ENCODE measurements at regions of chr3 and their contacts with region 1.

Region 1: DNA sequence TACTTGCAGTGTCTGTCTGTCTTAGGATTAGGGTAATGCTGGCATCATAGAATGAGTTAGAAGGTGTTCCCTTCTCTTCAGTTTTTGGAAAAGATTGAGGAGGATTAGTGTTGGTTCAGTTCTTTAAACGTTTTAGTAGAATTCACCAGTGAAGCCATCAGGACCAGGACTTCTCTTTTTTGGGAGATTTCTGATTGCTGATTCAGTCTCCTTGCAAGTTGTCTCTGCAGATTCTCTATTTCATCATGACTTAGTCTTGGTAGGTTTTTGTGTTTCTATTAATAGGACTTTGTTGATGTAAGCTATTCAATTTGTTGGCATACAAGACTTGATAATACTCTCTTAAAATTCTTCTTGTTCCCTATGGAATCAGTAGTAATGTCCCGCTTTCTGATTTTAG is 48.9 kb downstream of the STT3B start:
- DNase-seq: no peak
- ATAC-seq: no peak
- H3K4me3 ChIP-seq: no peak overlapping the region
- H3K4me3 Mint-ChIP-seq: no peak overlapping the region
- H3K27ac ChIP-seq: no peak overlapping the region
- H3K27ac Mint-ChIP-seq: no peak overlapping the region
- H3K4me1 ChIP-seq: peaks cover 0 to 6% of the 10 kb centered on the region in 2 donors
- H3K4me1 Mint-ChIP-seq: peaks cover 30% of the 10 kb centered on the region
- H3K27me3 ChIP-seq: no peaks in the 10 kb centered on the region
- H3K27me3 Mint-ChIP-seq: no peaks in the 10 kb centered on the region
- CTCF ChIP-seq: no peak

Region 2: GRCh38 chr3:31439890-31440750 is 141.5 kb before region 1 on chr3:
- CTCF ChIA-PET with region 1: no interaction called
- POLR2A ChIA-PET with region 1: no interaction called
- intact Hi-C with region 1: no loop called
- DNase-seq: no peak
- ATAC-seq: no peak
- H3K4me3 ChIP-seq: no peak overlapping the region
- H3K4me3 Mint-ChIP-seq: no peak overlapping the region
- H3K27ac ChIP-seq: no peak overlapping the region
- H3K27ac Mint-ChIP-seq: no peak overlapping the region
- H3K4me1 ChIP-seq: no peaks in the 10 kb centered on the region
- H3K4me1 Mint-ChIP-seq: peaks cover 3% of the 10 kb centered on the region
- H3K27me3 ChIP-seq: no peaks in the 10 kb centered on the region
- H3K27me3 Mint-ChIP-seq: peaks cover 5% of the 10 kb centered on the region
- CTCF ChIP-seq: no peak

Region 3: DNA sequence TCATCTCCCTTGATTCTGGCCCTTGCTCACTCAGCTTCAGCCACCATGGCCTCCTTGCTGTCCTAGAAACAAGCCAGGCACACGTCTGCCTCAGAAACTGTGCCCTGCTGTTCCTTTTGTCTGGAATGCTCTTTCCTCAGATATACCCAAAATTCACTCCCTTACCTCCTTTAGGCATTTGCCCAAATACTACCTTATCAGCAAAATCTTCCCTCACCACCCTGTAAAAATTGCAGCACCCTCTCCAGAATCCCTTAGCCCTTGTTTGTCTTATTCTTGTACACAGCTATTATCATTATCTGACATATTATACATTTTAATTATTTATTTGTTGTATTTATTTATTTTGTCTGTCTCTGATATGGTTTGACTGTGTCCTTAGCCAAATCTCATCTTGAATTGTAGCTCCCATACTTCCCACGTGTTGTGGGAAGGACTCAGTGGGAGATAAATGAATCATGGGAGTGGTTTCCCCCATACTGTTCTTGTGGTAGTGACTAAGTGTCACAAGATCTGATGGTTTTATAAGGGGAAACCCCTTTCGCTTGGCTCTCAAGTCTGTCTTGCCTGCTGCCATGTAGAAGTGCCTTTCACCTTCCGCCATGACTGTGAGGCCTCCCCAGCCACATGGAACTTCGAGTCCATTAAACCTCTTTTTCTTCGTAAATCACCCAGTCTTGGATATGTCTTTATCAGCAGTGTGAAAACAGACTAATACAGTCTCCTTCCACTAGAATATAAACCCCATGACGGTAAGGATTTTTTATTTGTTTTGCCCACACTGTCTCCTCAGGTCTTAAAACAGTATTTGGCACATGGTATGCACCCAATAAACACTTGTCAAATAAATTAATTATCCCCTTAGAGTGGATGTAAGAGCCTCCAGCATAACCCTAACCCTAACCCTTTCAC is 108.9 kb before region 1 on chr3:
- CTCF ChIA-PET with region 1: no interaction called
- POLR2A ChIA-PET with region 1: no interaction called
- intact Hi-C with region 1: no loop called
- DNase-seq: no peak
- ATAC-seq: no peak
- H3K4me3 ChIP-seq: no peak overlapping the region
- H3K4me3 Mint-ChIP-seq: no peak overlapping the region
- H3K27ac ChIP-seq: no peak overlapping the region
- H3K27ac Mint-ChIP-seq: no peak overlapping the region
- H3K4me1 ChIP-seq: no peaks in the 10 kb centered on the region
- H3K4me1 Mint-ChIP-seq: peaks cover 3% of the 10 kb centered on the region
- H3K27me3 ChIP-seq: no peaks in the 10 kb centered on the region
- H3K27me3 Mint-ChIP-seq: no peaks in the 10 kb centered on the region
- CTCF ChIP-seq: no peak

Region 4: GRCh38 chr3:31567036-31567435 is 14.6 kb before region 1 on chr3:
- CTCF ChIA-PET with region 1: interaction called, 3 read pairs
- POLR2A ChIA-PET with region 1: no interaction called
- intact Hi-C with region 1: loop called (anchors 2 kb)
- DNase-seq: peak; percentile 33
- ATAC-seq: peak; percentile 49
- H3K4me3 ChIP-seq: no peak overlapping the region
- H3K4me3 Mint-ChIP-seq: no peak overlapping the region
- H3K27ac ChIP-seq: no peak overlapping the region
- H3K27ac Mint-ChIP-seq: no peak overlapping the region
- H3K4me1 ChIP-seq: peaks cover 19 to 51% of the 10 kb centered on the region in 2 donors
- H3K4me1 Mint-ChIP-seq: peaks cover 77% of the 10 kb centered on the region
- H3K27me3 ChIP-seq: no peaks in the 10 kb centered on the region
- H3K27me3 Mint-ChIP-seq: no peaks in the 10 kb centered on the region
- CTCF ChIP-seq: peak; percentile 68

Region 5: DNA sequence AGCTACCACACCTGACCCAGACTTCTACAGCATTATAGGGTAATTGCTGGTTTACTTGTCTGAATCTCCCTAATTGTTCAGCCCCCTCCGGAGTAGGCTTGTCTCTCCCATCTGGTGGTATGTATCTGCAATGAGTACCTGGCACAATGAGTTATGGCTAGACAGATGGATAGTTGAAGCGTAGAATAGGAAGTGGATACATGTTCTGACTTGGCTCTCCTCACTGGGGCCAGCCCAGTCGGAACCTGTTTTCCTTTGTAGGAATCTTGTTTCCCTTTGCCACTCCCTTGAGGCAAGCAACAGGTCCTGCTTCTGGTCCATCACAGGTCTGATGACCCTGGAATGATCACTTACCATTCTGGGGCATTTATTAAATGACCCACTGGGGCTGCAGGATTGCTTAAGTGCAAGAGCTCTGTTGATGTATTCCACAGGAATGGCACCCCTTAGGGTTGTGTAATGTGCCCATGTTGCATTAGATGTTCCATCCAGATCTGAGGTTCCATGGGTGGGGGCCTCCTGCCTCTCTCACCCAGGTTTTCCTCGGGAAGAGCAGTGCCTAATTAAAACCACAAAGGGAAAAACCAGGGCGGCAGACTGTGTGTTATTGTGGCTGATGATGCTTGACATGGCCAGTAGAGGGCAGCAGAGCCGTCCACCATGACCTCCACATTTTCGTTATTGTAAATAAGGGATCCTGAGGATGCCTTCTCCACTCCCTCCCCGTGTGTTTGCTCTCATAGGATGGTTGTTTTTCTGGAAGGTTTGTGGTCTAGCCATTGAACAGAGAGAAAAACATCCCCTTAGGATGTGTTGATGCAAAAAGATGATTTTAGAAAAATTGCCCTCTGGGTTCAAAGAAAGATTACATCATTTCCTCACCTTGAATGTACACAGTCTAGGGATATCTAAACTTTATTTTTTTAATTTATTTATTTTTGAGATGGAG is 714.9 kb after region 1 on chr3:
- CTCF ChIA-PET with region 1: no interaction called
- POLR2A ChIA-PET with region 1: no interaction called
- intact Hi-C with region 1: no loop called
- DNase-seq: peak; percentile 74
- ATAC-seq: peak; percentile 64
- H3K4me3 ChIP-seq: no peak overlapping the region
- H3K4me3 Mint-ChIP-seq: no peak overlapping the region
- H3K27ac ChIP-seq: no peak overlapping the region
- H3K27ac Mint-ChIP-seq: no peak overlapping the region
- H3K4me1 ChIP-seq: peaks cover 6 to 7% of the 10 kb centered on the region in 2 donors
- H3K4me1 Mint-ChIP-seq: peaks cover 5% of the 10 kb centered on the region
- H3K27me3 ChIP-seq: no peaks in the 10 kb centered on the region
- H3K27me3 Mint-ChIP-seq: peaks cover 3% of the 10 kb centered on the region
- CTCF ChIP-seq: peak; percentile 94